Gastrocnemius medialis (tissue), 4 donors: ENCODE measurements at regions of chr10 and their contacts with region 1.

Region 1: GRCh38 chr10:114173921-114174694 is at the start of gene CCDC186:
- DNase-seq: peak; percentile 95 to 97
- ATAC-seq: peak; percentile 89 to 90
- H3K4me3 ChIP-seq: peak within 1 kb of the TSS; percentile 84 to 99 (median 92)
- H3K27ac ChIP-seq: peak within 1 kb of the TSS; percentile 92 to 98 (median 93)
- H3K4me1 ChIP-seq: peaks cover 11 to 16% of the 10 kb centered on the region in 2 donors
- H3K27me3 ChIP-seq: no peaks in the 10 kb centered on the region
- CTCF ChIP-seq: no peak
- POLR2A ChIP-seq: peak; percentile 67 to 81
- total RNA-seq, gene CCDC186: 8.8 to 14.5 (median 9.8) TPM

Region 2: GRCh38 chr10:113679463-113680189 is 494.5 kb before region 1 on chr10 and contains the start of gene CASP7:
- in situ Hi-C with region 1: no loop called
- intact Hi-C with region 1: loop called (anchors 5 kb)
- DNase-seq: peak; percentile 71 to 75
- ATAC-seq: peak; percentile 81 to 86
- H3K4me3 ChIP-seq: peak within 1 kb of the TSS; percentile 88 to 100 (median 95)
- H3K27ac ChIP-seq: peak within 1 kb of the TSS; percentile 96 to 99 (median 98)
- H3K4me1 ChIP-seq: peaks cover 3 to 16% of the 10 kb centered on the region in 2 donors
- H3K27me3 ChIP-seq: no peaks in the 10 kb centered on the region
- CTCF ChIP-seq: peak in 1 of 5 experiments; percentile 29
- POLR2A ChIP-seq: peak; percentile 63 to 73
- total RNA-seq, gene CASP7: 5.3 to 23.9 (median 8.9) TPM

Region 3: GRCh38 chr10:113854011-113854760 is 319.9 kb before region 1 on chr10 and contains the starts of genes DCLRE1A and NHLRC2:
- in situ Hi-C with region 1: no loop called
- intact Hi-C with region 1: loop called (anchors 5 kb)
- DNase-seq: peak; percentile 60 to 71
- ATAC-seq: peak; percentile 86 to 90
- H3K4me3 ChIP-seq: peak within 1 kb of the TSS; percentile 74 to 99 (median 94)
- H3K27ac ChIP-seq: peak within 1 kb of the TSS; percentile 90 to 96 (median 94)
- H3K4me1 ChIP-seq: peaks cover 58 to 66% of the 10 kb centered on the region in 2 donors
- H3K27me3 ChIP-seq: no peaks in the 10 kb centered on the region
- CTCF ChIP-seq: no peak
- POLR2A ChIP-seq: peak in 1 of 2 donors; percentile 17
- total RNA-seq, gene DCLRE1A: 2.6 to 4.7 (median 3.8) TPM
- total RNA-seq, gene NHLRC2: 11.4 to 109 (median 40.7) TPM

Region 4: GRCh38 chr10:114223066-114223465 is 49.0 kb after region 1 on chr10:
- in situ Hi-C with region 1: no loop called
- intact Hi-C with region 1: no loop called
- DNase-seq: peak; percentile 10 to 62
- ATAC-seq: peak in 1 of 2 donors; percentile 66
- H3K4me3 ChIP-seq: no peak overlapping the region
- H3K27ac ChIP-seq: no peak overlapping the region
- H3K4me1 ChIP-seq: peaks cover 0 to 8% of the 10 kb centered on the region in 2 donors
- H3K27me3 ChIP-seq: no peaks in the 10 kb centered on the region
- CTCF ChIP-seq: no peak
- POLR2A ChIP-seq: no peak

Region 5: DNA sequence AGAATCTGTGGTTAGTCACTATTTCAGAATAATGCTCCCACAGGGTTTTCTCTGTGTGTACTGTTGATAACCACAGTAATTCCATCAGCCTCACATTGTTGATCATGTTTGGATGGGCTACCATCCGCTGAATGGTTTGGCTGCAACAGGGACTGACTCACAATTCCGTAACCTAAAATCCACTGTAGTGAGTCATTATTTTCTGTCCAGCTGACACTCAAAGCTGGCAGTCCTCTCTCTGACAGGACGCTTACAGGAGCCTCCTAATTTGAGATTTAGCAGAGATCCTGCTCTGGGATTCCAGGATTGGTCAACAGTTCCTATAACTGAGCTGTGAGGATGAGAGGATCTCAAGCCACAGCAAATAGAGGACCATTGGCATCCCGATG is 97.7 kb after region 1 on chr10:
- in situ Hi-C with region 1: no loop called
- intact Hi-C with region 1: loop called (anchors 5 kb)
- DNase-seq: peak; percentile 66 to 74
- ATAC-seq: peak; percentile 98 to 99
- H3K4me3 ChIP-seq: no peak overlapping the region
- H3K27ac ChIP-seq: peak overlapping the region; percentile 41 to 78 (median 56)
- H3K4me1 ChIP-seq: peaks cover 14 to 25% of the 10 kb centered on the region in 2 donors
- H3K27me3 ChIP-seq: no peaks in the 10 kb centered on the region
- CTCF ChIP-seq: no peak
- POLR2A ChIP-seq: no peak

Region 6: DNA sequence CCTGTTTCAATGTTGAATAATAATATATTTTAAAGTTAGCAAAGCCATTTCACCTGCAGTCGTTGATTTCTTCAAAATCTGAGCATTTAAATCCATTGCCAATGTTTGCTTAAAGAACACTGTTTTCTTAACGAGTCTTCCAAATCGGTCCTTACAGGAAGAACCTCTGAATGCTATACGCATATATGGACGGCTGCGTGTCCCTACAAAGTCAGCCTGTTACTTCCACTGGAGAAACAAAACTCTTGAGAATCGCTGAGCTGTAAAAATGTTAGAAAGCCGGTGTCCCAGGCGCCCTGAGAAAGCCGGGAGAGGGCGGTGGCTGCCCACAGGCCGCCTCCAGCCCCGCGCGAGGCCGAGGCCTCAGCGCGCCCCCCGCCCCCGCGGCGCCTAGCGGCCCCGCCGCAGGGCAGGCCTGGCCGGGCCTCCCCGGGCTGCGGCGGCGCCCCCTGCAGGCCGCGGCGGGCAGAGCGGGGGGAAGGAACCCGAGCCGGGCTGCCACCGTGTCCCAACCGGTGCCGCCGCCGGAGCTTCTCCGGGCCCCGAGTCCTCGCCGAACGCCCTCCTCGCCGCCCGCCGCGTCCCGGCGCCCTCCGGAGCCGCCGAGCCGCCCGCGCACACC is 647.3 kb after region 1 on chr10 and contains the start of gene FHIP2A:
- in situ Hi-C with region 1: no loop called
- intact Hi-C with region 1: loop called (anchors 5 kb)
- DNase-seq: peak; percentile 40 to 76
- ATAC-seq: peak; percentile 65 to 73
- H3K4me3 ChIP-seq: peak within 1 kb of the TSS; percentile 77 to 89 (median 86)
- H3K27ac ChIP-seq: peak within 1 kb of the TSS; percentile 96 to 98 (median 96)
- H3K4me1 ChIP-seq: peaks cover 23 to 27% of the 10 kb centered on the region in 2 donors
- H3K27me3 ChIP-seq: no peaks in the 10 kb centered on the region
- CTCF ChIP-seq: peak in 4 of 5 experiments; percentile 82 to 91 (median 90)
- POLR2A ChIP-seq: peak; percentile 80 to 82
- total RNA-seq, gene FHIP2A: 22.2 to 35.7 (median 30.1) TPM